RWPE1 (cell line): ENCODE measurements at regions of chr4 and their contacts with region 1.

Region 1: GRCh38 chr4:105808750-105809041 is 86.6 kb upstream of the NPNT start:
- DNase-seq: peak; percentile 8
- H3K27ac ChIP-seq: no peak overlapping the region
- CTCF ChIP-seq: no peak

Region 2: GRCh38 chr4:105797225-105797624 is 11.5 kb before region 1 on chr4:
- CTCF ChIA-PET with region 1: interaction called, 10 read pairs
- POLR2A ChIA-PET with region 1: no interaction called
- DNase-seq: no peak
- H3K27ac ChIP-seq: no peak overlapping the region
- CTCF ChIP-seq: no peak

Region 3: DNA sequence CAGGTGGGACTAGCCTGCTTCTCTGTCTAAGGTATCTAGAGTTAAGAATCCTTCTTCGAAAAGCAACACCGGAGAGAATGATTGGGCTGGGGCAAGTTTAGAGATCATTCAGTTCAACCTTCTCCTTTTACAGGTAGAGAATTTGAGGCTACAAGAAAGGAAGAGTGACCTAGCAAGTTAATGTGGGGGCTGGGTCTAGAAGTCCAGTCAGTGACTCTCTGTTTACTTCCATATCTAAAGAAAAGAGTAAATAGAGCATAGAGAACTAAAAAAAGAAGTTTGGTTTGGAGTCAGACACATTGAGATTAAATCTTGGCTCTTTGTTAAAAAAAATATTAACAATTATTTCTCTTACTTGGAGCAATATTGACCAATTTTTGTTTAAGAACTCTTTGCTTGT is 22.5 kb after region 1 on chr4:
- CTCF ChIA-PET with region 1: no interaction called
- POLR2A ChIA-PET with region 1: no interaction called
- DNase-seq: no peak
- H3K27ac ChIP-seq: no peak overlapping the region
- CTCF ChIP-seq: no peak

Region 4: GRCh38 chr4:105933048-105933447 is 124.4 kb after region 1 on chr4:
- CTCF ChIA-PET with region 1: no interaction called
- POLR2A ChIA-PET with region 1: no interaction called
- DNase-seq: no peak
- H3K27ac ChIP-seq: no peak overlapping the region
- CTCF ChIP-seq: no peak